Activated naive CD4-positive, alpha-beta T cell treated with anti-CD3 and anti-CD28 coated beads for 36 hours (primary cell): ENCODE measurements at regions of chr9 and their contacts with region 1.

Region 1: DNA sequence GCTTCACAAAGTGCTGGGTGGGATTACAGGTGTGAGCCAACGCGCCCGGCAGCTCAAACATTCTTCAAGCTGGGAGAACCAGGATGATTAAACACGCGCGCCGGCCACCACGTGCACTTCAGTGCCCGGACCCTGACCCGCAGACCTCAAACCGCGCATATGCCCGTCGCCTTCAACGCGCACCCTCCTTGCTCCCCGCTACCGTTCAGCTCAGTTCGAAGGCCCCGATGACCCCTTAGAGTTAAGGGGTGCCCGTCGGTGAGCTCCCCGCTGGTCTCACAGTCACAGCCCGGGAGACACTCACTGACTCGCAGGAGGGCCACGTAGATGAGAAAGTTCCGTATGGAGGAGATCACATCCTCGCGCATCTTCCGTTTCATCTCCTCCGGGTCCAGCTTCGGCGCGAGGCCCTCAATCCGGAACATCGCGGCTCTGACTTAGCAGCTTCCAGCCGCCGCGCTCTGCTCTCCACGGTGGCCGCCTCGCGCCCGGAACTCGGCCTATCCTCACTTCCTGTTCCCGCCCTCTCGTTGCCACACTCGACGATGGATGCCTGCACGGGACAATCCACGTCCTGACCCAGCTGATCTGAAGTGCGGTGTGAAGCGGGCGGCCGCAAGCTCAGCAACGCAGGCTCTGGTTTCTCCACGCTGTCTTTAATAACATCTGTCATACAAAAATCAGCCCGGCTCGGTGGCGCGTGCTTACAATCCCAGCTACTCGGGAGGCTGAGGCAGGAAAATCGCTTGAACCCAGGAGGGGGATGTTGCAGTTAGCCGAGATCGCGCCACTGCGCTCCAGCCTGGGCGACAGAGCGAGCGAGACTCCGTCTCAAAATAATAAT is at the start of gene TOMM5:
- DNase-seq: peak; percentile 96
- H3K4me3 Mint-ChIP-seq: peak within 1 kb of the TSS; percentile 92
- H3K27ac Mint-ChIP-seq: peak within 1 kb of the TSS; percentile 93
- H3K4me1 Mint-ChIP-seq: peaks cover 37% of the 10 kb centered on the region
- H3K27me3 Mint-ChIP-seq: peaks cover 3% of the 10 kb centered on the region
- total RNA-seq, gene TOMM5: 136 to 140 TPM

Region 2: DNA sequence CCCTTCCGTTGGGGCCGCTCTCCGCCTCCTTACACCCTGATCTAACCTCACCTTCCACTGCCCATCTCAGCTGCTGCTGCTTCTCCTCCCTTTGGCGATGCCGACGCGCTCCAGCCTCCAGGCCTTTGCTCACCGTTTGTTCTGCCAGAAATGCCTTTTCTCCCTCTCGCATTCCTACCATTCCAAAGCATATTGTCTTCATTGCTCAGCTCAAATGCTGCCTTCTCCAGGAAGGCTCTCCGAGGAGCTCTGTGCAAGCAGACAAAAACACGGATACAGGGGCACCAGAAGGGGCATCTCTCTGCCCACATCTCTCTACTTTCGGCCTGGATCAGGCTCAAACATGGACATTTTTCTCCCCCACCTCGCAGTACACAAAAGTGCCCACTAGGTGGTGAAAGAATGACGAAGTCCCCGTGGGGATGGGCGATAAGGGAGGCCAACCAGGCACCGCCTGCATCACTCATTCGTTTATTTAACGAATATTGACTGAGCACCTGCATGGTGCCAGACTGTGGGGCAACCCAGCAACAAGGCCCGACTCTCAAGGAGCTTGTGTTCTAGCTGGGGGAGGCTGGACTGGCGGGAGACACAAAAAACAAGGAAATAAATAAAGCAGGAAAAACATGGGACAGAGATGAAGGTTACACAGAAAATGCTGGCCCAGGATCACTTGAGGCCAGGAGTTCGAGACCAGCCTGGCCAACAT is 177.2 kb before region 1 on chr9:
- CTCF ChIA-PET with region 1: no interaction called
- intact Hi-C with region 1: loop called (anchors 2 kb)
- DNase-seq: peak; percentile 90
- H3K4me3 Mint-ChIP-seq: peak overlapping the region; percentile 34
- H3K27ac Mint-ChIP-seq: no peak overlapping the region
- H3K4me1 Mint-ChIP-seq: peaks cover 15% of the 10 kb centered on the region
- H3K27me3 Mint-ChIP-seq: peaks cover 5% of the 10 kb centered on the region

Region 3: DNA sequence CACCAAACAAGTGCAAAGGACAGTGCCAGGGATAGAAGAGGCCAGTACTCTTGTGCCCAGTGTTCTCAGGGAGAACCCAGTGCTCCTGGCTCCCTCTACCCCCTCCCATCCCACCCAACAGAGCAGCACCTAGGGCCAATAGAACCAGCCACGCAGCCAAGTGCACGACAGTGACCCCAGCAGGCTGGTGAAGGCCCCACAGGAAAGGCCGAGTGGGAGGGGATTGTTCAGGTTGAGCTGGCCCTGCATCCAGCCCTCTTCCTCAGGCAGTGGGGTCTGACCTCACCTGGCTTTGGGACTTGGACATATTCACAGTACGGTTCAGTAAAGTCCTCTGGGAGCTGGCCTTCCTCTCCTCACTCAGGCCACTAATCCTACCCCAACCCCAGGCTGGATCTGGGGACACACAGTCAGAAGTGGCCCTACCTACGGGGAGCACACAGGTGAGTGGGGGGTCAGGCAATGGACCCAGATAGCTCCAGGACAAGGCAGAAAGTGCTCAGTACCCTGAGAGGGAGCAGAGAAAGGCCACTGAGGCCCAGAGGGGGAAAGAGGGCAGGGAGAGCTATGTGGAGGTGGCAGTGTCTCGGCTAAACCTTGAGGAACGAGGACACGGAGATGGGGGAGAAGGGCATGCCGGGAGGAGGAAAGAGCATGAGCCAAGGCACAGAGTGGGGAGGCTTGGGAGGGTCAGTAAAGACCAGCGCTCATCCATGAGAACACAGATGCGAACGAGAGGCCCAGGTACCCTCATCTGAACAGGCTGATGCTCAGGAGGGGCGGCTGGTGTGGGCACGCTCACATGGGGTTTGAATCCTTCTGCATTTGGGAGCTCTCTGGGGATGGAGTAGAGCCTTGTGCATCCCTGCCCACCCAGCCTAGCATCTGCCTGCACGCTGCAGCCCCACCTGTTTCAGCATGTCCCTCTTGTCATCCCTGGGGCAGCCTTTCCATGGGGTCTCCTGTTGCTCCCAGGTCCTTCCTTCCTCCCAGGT is 81.0 kb before region 1 on chr9:
- CTCF ChIA-PET with region 1: no interaction called
- intact Hi-C with region 1: no loop called
- DNase-seq: no peak
- H3K4me3 Mint-ChIP-seq: no peak overlapping the region
- H3K27ac Mint-ChIP-seq: no peak overlapping the region
- H3K4me1 Mint-ChIP-seq: no peaks in the 10 kb centered on the region
- H3K27me3 Mint-ChIP-seq: no peaks in the 10 kb centered on the region

Region 4: DNA sequence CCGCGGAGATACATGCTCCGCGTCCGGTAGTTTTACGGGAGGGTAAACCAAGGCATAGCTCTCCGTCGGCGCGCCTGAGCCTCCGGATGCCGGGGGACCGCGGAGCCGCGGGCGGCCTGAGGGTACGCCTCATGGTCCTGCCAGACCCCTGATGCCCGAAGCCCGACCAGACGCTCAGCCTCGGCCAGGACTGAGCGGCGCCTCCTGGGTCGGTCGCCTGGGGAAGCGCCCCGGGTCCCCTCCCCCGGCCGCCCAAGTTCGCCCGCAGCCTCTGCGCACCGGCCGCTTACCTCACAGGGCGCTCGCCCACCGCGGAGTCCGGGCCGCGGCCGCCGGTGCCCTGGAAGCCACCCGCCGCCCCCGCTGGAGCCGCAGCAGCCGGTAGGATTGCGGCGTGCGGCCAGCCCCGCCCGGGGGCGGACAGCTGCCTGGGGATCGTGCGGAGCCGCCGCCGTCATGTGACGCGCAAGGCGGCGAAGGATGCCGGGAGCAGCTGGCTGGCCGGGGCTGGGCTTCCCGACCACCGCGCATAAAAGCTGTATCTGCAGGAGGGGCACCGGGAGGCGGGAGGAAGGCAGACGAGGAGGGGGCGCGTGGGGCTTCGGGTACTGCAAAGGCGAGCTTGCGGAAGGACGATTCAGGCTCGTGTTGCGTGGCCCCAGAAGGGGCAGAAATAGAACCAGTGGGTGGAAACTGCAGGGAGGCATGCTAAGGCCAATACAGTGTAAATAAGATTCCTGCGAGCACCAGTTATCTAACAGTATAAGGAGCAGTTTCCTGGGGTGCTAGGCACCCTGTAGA is 16.2 kb before region 1 on chr9 and contains the start of gene FBXO10:
- CTCF ChIA-PET with region 1: interaction called, 5 read pairs
- intact Hi-C with region 1: loop called (anchors 2 kb)
- DNase-seq: peak; percentile 47
- H3K4me3 Mint-ChIP-seq: peak within 1 kb of the TSS; percentile 77
- H3K27ac Mint-ChIP-seq: no peak within 1 kb of the TSS
- H3K4me1 Mint-ChIP-seq: peaks cover 21% of the 10 kb centered on the region
- H3K27me3 Mint-ChIP-seq: no peaks in the 10 kb centered on the region
- total RNA-seq, gene FBXO10: 1.0 to 1.1 TPM

Region 5: GRCh38 chr9:37784616-37785483 is 192.5 kb after region 1 on chr9 and contains the start of gene EXOSC3:
- CTCF ChIA-PET with region 1: no interaction called
- intact Hi-C with region 1: loop called (anchors 5 kb)
- DNase-seq: peak; percentile 91
- H3K4me3 Mint-ChIP-seq: peak within 1 kb of the TSS; percentile 96
- H3K27ac Mint-ChIP-seq: peak within 1 kb of the TSS; percentile 94
- H3K4me1 Mint-ChIP-seq: peaks cover 37% of the 10 kb centered on the region
- H3K27me3 Mint-ChIP-seq: no peaks in the 10 kb centered on the region
- total RNA-seq, gene EXOSC3: 93.7 to 99.7 TPM

Region 6: DNA sequence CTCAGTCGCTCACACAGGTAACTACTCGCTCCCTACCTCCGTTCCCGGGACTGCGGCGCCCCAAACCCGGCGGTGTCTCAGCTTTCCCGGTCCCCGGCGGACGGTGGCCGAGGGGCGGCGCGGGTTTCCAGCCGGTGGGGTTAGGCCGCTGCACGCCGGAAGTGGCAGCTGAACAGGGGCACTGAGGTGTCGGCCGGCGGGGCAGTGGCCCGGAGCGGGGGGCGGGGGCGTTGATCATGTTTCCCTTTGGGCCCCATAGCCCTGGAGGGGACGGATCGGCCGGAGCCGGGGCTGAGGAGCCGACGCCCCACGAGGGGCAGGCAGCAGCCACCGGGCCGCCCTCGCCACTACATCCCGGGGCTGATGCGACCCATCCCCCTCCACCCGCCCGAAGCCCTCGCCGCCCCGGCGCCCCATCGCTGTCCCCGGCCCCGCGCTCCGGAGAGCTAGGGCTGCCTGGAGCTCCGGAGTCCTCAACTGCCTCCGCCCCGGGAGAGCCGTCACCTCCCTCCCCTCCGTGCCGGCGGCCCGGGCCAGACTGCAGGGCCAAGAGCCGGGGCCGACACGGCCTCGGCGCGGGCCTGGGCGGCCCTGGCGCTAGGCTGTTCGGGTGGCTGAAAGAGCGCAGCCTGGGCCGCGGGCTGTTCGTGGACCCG is 208.4 kb after region 1 on chr9 and contains the start of gene DCAF10:
- CTCF ChIA-PET with region 1: no interaction called
- intact Hi-C with region 1: loop called (anchors 2 kb)
- DNase-seq: peak; percentile 89
- H3K4me3 Mint-ChIP-seq: peak within 1 kb of the TSS; percentile 93
- H3K27ac Mint-ChIP-seq: peak within 1 kb of the TSS; percentile 79
- H3K4me1 Mint-ChIP-seq: peaks cover 38% of the 10 kb centered on the region
- H3K27me3 Mint-ChIP-seq: no peaks in the 10 kb centered on the region
- total RNA-seq, gene DCAF10: 9.4 to 10.9 TPM

Region 7: GRCh38 chr9:37936965-37937364 is 344.6 kb after region 1 on chr9:
- CTCF ChIA-PET with region 1: no interaction called
- intact Hi-C with region 1: no loop called
- DNase-seq: no peak
- H3K4me3 Mint-ChIP-seq: no peak overlapping the region
- H3K27ac Mint-ChIP-seq: no peak overlapping the region
- H3K4me1 Mint-ChIP-seq: no peaks in the 10 kb centered on the region
- H3K27me3 Mint-ChIP-seq: no peaks in the 10 kb centered on the region